SK-N-SH (cell line): ENCODE measurements at regions of chr3 and their contacts with region 1.

Region 1: DNA sequence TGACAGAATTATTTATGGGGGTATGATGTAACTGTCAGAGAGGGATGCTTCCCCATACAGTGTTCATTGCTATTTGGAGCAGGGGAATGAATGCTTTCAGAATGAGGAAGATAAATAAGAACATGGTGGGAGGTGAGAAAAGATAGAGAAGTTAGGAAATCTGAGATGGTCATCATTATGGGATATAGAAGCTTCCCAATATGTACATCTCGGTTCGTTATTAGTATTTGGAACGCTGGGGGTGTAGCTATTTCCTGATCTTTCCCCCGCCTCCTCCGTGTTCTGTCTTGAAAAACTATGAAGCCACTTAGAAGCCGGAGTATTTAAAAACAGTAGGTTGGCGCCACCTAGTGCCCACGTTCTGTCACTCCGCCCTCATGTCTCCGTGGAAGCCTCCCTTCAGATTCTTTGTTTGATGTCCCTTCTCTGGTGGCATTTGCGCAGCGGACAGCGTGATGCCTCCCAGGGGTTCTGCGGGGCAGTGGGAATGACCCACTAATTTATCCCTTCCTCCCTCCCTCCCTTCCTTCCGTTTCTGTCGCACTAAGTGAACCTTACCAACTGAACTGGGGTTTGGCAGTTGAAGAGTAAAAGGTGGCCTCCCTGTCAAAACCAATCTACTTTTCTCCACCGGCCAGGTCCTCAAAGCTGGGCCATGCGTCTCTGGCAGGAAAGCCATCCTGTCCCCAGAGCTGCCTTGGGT is 184.5 kb downstream of the FEZF2 start:
- DNase-seq: peak; percentile 76
- H3K4me3 ChIP-seq: peak overlapping the region in 1 of 2 experiments; percentile 29; a peak in 1 of 4 replicates
- H3K27ac ChIP-seq: no peak overlapping the region
- H3K4me1 ChIP-seq: peaks cover 0 to 4% of the 10 kb centered on the region in 2 experiments; a peak in 1 of 4 replicates
- H3K27me3 ChIP-seq: no peaks in the 10 kb centered on the region
- CTCF ChIP-seq: peak; percentile 87
- EP300 ChIP-seq: no peak
- RAD21 ChIP-seq: peak; percentile 87

Region 2: DNA sequence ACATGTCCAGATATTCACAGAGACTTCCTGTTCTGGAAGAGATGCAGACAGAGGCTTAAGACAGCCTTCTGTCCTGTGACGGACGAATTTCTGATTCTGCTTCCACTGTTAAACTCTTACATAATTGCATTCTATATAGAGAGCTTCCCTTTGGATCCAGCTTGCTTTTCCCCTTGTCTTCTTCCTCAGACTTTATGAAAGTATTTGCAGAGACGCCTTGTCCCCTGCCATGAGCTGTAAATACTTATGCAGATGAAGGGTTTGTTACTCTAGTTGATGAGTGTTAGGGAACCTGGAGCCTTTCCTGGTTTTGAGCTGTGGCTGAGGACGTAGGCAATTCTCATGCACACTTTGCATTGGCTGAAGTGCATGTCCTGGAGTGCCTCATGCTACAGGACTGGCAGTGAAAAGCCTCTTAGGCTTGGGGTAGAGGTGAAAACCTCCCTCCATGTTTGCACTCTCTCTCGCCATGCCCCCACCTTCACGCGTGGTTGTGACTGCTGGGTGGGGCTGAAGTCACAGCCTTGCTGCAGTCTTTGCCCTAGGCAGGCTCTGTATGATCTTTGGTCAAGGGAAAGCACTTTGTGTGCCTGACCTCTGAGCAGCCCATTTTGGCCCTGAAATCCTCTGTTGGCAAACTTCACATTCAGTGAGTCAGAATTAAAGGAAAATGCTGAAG is 340.9 kb before region 1 on chr3:
- CTCF ChIA-PET with region 1: interaction called, 10 read pairs
- POLR2A ChIA-PET with region 1: no interaction called
- DNase-seq: no peak
- H3K4me3 ChIP-seq: no peak overlapping the region
- H3K27ac ChIP-seq: peak overlapping the region in 1 of 2 experiments; percentile 47; a peak in 2 of 4 replicates
- H3K4me1 ChIP-seq: peaks cover 0 to 10% of the 10 kb centered on the region in 2 experiments
- H3K27me3 ChIP-seq: no peaks in the 10 kb centered on the region
- CTCF ChIP-seq: no peak
- EP300 ChIP-seq: no peak
- RAD21 ChIP-seq: no peak

Region 3: GRCh38 chr3:62077009-62077408 is 111.8 kb before region 1 on chr3:
- CTCF ChIA-PET with region 1: no interaction called
- POLR2A ChIA-PET with region 1: no interaction called
- DNase-seq: no peak
- H3K4me3 ChIP-seq: no peak overlapping the region
- H3K27ac ChIP-seq: no peak overlapping the region
- H3K4me1 ChIP-seq: no peaks in the 10 kb centered on the region
- H3K27me3 ChIP-seq: no peaks in the 10 kb centered on the region
- CTCF ChIP-seq: no peak
- EP300 ChIP-seq: no peak
- RAD21 ChIP-seq: no peak

Region 4: GRCh38 chr3:62169906-62170660 is 18.7 kb before region 1 on chr3:
- CTCF ChIA-PET with region 1: interaction called, 13 read pairs
- POLR2A ChIA-PET with region 1: interaction called, 4 read pairs
- DNase-seq: no peak
- H3K4me3 ChIP-seq: no peak overlapping the region
- H3K27ac ChIP-seq: peak overlapping the region in 1 of 2 experiments; percentile 76; a peak in 2 of 4 replicates
- H3K4me1 ChIP-seq: peaks cover 0 to 5% of the 10 kb centered on the region in 2 experiments; a peak in 2 of 4 replicates
- H3K27me3 ChIP-seq: no peaks in the 10 kb centered on the region
- CTCF ChIP-seq: no peak
- EP300 ChIP-seq: peak in 1 of 2 experiments; percentile 35; a peak in 1 of 4 replicates
- RAD21 ChIP-seq: no peak

Region 5: GRCh38 chr3:62451211-62451892 is 262.5 kb after region 1 on chr3:
- CTCF ChIA-PET with region 1: no interaction called
- POLR2A ChIA-PET with region 1: no interaction called
- DNase-seq: no peak
- H3K4me3 ChIP-seq: no peak overlapping the region
- H3K27ac ChIP-seq: no peak overlapping the region
- H3K4me1 ChIP-seq: no peaks in the 10 kb centered on the region
- H3K27me3 ChIP-seq: no peaks in the 10 kb centered on the region
- CTCF ChIP-seq: no peak
- EP300 ChIP-seq: no peak
- RAD21 ChIP-seq: no peak